AG04450 (cell line): ENCODE measurements at regions of chr7 and their contacts with region 1.

Region 1: DNA sequence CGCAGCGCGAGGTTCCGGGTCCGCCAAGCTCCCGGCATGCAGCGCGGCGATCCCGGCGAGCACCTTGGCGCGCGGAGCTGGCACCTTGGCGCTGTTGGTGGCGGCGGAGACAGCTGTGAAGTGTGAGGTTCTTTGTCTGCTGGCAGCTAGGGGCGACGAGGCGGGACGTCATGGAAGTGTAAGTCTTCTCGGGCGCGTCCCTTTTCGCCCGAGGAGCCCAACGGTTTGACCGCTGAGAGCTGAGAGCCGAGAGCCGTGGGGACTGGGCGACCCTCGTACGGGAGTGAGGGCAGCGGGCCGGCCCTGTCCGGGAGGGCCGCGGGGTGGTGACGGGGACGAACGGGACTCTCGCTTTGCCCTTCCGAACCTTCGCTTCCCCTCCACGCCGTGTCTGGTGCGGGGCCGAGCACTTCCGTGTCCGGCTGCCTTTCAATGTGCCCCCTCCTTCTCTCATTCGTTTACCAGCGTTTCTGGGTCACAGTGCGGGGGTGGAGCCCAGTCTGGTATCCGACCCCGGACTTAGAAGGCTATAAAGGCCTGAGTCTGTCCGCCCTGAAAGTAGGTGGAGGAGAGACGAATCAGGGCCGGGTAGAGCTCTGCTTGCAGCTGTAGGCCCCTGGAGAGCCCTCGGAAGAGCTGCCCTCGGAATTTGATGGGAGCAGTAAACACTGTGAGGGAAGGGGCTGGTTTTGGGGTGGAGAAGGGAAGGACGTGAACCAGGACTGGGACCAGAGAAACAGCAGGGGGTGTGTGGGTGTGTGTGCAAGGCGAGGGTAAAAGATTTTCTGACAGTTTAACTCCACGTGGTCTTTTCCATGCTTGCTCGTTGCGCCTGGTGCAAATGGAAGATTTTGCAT is at the start of gene CRCP:
- DNase-seq: peak; percentile 30
- H3K4me3 ChIP-seq: peak within 1 kb of the TSS; percentile 85
- H3K27ac ChIP-seq: peak within 1 kb of the TSS; percentile 87
- H3K27me3 ChIP-seq: no peaks in the 10 kb centered on the region
- CTCF ChIP-seq: peak; percentile 62
- polyA plus RNA-seq, gene CRCP: 26.0 and 28.5 TPM in 2 replicates

Region 2: DNA sequence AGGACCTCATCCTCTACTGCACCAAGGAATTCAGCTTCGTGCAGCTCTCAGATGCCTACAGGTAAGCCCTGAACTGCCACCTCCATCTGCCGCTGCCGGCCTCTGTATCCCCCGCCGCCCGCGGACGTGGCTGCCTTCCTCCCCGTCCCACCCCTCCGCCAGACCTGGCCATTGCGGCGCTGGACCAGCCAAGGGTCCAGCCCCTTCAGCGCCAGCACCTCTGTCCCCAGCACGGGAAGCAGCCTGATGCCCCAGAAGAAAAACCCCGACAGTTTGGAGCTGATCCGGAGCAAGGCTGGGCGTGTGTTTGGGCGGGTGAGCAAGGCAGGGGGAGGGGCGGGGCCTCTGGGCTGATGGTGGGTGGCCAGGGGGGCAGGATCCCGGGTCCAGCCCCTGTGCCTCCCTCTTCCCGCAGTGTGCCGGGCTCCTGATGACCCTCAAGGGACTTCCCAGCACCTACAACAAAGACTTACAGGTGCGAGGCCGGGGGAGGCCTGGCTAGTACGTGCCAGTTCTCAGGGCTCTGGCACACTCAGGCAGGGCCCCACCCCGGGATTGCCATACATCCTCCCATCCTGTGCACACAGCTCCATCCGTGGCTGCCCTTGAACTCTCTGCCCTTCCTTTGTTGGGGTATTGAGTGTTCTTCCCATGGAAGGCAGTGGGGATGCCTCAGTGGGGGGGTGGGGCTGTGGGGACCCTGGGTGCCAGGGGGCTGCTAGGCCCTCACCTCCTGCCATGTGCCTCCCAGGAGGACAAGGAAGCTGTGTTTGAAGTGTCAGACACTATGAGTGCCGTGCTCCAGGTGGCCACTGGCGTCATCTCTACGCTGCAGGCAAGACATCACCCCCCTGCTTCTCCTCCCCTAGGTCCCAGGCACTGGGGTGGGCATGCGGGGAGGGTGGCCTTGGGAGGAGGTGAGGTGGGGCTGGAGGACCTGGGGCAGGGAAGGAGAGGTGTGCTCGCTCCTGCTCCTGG is 25.9 kb before region 1 on chr7:
- CTCF ChIA-PET with region 1: no interaction called
- POLR2A ChIA-PET with region 1: no interaction called
- DNase-seq: no peak
- H3K4me3 ChIP-seq: no peak overlapping the region
- H3K27ac ChIP-seq: no peak overlapping the region
- H3K27me3 ChIP-seq: no peaks in the 10 kb centered on the region
- CTCF ChIP-seq: no peak

Region 3: GRCh38 chr7:66099616-66100474 is 15.2 kb before region 1 on chr7:
- CTCF ChIA-PET with region 1: no interaction called
- POLR2A ChIA-PET with region 1: interaction called, 14 read pairs
- DNase-seq: peak; percentile 61
- H3K4me3 ChIP-seq: peak overlapping the region; percentile 59
- H3K27ac ChIP-seq: peak overlapping the region; percentile 75
- H3K27me3 ChIP-seq: no peaks in the 10 kb centered on the region
- CTCF ChIP-seq: no peak